Activated CD8-positive, alpha-beta T cell treated with anti-CD3 and anti-CD28 coated beads for 36 hours (primary cell): ENCODE measurements at regions of chr11 and their contacts with region 1.

Region 1: DNA sequence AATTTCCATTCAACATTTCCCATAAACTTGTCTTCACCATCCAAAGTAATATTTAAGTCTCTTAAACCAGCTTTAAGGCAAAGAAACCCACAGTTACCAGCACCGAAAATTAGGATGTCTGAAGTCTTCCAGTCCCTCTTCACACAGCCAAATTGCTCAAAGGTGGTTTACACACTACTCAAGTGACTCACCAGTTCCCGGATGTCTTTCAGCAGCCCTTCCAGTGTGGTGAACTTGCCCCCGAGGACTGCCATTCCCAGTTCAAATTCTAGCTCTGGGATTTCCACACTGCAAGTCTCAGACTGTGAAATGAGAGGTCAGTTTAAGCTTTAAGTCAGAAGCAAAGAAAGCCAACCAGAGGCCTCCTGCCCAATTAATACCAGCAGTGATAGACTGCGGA is 5.1 kb downstream of the ZPR1 start:
- DNase-seq: no peak
- ATAC-seq: peak; percentile 24
- H3K4me3 Mint-ChIP-seq: no peak overlapping the region
- H3K27ac Mint-ChIP-seq: peak overlapping the region; percentile 84
- H3K4me1 Mint-ChIP-seq: peaks cover 77% of the 10 kb centered on the region
- H3K27me3 Mint-ChIP-seq: no peaks in the 10 kb centered on the region
- CTCF ChIP-seq: no peak

Region 2: DNA sequence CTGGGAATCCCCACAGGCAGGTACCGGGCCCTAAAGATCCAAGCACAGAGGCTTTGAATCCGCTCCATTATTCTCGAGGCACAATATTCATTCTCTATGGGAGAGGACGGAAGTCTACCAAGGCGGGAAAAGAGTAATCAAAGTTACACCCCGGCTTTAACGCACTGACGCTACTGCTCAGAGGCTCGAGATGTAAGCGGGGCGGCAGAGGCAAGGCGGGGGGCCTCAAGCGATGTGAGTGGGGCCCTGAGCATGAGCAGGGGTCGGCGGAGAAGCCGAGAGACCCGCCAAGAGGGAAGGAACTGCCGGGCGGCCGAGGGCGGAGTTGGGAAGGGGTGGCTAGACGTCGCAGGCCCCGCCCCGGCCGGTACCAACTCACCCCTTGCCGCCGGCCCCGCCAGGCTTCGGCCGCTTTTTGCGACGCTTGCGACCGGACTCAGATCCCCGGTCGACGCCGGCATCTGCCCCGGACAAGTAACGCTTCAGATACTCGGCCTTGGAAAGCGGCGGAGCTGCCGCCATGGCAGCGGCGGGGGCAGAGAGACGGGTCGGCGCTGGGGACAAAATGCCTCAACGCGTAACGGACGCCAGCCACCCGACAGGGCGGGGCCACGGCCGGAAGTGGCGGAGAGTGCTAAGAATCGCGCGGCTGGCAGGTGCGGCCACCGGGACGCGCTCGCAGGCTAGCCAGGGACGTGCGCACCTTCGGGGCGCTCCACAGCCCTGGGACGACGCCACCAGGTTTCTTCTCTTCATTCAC is 10.1 kb before region 1 on chr11 and contains the start of gene BUD13:
- CTCF ChIA-PET with region 1: interaction called, 9 read pairs
- POLR2A ChIA-PET with region 1: interaction called, 44 read pairs
- intact Hi-C with region 1: no loop called
- DNase-seq: peak; percentile 95
- ATAC-seq: peak; percentile 94
- H3K4me3 Mint-ChIP-seq: peak within 1 kb of the TSS; percentile 92
- H3K27ac Mint-ChIP-seq: peak within 1 kb of the TSS; percentile 98
- H3K4me1 Mint-ChIP-seq: peaks cover 51% of the 10 kb centered on the region
- H3K27me3 Mint-ChIP-seq: no peaks in the 10 kb centered on the region
- CTCF ChIP-seq: no peak
- total RNA-seq, gene BUD13: 26.6 to 28.6 TPM

Region 3: DNA sequence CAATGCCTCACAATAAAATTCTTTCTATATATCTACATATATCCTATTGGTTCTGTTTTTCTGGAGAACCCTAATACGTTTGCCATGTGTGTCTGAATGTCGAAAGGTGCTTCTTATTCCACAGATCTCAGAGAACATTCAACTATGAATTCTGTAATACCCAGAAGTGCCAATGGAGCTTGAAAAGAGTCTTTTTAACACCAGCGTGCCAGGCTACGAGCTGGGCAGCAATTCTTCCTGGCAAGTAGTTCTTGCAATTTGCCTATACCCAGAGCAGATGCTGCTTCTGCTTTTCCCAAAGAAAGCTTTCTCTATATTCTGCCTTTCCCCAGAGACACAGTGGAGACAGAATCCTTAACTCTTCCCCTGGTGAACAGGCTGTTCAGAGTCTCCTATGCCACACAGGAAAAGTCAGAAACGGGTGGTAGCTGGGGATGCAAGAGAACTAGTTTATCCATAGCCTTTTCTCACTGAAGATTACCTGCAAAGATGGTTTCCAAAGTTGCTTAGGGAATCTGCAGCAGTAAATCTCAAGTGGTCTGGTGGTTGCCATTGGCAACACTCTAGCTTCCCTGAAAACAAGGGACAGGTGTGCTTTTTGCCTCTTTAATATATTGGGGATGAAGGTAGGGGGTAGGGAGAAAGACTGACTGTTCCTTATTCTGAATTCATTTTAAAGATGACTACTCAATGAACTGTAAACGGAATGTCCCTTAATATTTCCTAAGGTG is 344.6 kb after region 1 on chr11:
- CTCF ChIA-PET with region 1: no interaction called
- POLR2A ChIA-PET with region 1: no interaction called
- intact Hi-C with region 1: no loop called
- DNase-seq: no peak
- ATAC-seq: no peak
- H3K4me3 Mint-ChIP-seq: no peak overlapping the region
- H3K27ac Mint-ChIP-seq: no peak overlapping the region
- H3K4me1 Mint-ChIP-seq: no peaks in the 10 kb centered on the region
- H3K27me3 Mint-ChIP-seq: no peaks in the 10 kb centered on the region
- CTCF ChIP-seq: no peak